A673 (cell line): ENCODE measurements at regions of chr2 and their contacts with region 1.

Region 1: GRCh38 chr2:66574701-66575624 is 140.0 kb downstream of the MEIS1 start:
- DNase-seq: peak; percentile 97
- H3K4me3 ChIP-seq: peak overlapping the region; percentile 65
- H3K27ac ChIP-seq: peak overlapping the region; percentile 92
- H3K4me1 ChIP-seq: peaks cover 75% of the 10 kb centered on the region
- H3K27me3 ChIP-seq: no peaks in the 10 kb centered on the region
- CTCF ChIP-seq: peak; percentile 74

Region 2: DNA sequence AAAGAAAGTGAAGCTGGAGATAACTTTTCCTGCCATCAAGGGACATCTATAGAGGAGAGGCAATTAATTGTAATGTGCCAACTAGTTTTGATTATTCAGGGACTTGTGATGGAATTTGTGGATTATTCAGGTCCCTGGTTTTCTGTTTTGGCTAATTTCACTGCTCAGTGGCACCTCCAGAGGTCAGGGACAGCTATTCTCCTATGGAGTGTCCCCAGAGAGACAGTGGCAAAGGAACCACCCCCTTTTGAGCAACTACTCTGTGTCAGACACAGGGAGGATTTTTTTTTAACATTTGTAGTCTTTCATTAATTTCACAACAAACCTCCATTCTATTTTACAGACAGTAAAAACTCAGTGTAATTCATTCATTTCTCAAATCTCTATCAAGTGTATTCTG is 936.5 kb before region 1 on chr2:
- CTCF ChIA-PET with region 1: no interaction called
- POLR2A ChIA-PET with region 1: no interaction called
- intact Hi-C with region 1: loop called (anchors 5 kb)
- DNase-seq: peak; percentile 77
- H3K4me3 ChIP-seq: no peak overlapping the region
- H3K27ac ChIP-seq: peak overlapping the region; percentile 84
- H3K4me1 ChIP-seq: peaks cover 60% of the 10 kb centered on the region
- H3K27me3 ChIP-seq: no peaks in the 10 kb centered on the region
- CTCF ChIP-seq: peak; percentile 46

Region 3: DNA sequence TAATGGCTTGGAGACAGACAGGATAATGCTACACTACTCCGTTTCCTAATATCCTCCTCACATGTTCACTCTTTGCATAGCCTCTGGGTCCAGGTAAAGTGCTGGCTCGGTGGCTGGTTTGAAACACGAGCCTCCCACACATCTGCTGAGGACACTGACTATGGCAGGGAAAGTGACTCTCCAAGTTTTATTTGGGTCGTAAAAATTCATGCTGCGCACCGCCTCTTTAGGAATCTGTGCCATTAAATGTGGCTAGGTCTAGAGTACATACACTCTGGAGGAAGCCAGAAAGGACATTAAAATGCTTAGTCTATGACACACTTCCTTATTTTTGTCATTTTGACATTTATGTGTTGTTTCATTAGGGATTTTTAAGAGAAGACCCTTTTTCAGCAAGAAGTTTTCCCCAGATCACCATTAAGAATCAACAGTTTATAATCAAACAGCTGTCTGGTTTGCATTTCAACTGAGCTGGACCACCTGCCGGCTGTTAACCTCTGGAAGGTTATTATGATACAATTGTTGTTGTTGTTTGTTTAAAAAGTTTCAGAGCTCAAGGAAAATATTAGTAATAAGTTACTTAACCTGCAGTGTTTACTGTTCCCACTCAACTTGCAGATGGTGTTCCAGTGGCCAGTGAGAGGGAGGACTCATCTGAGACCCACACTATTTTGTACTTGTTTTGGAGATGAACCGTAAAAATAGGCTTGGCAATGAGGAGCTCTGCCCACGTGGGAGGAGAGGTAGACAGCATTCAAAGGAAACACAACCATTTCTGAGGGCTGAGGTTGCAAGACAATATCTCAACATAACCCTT is 583.4 kb before region 1 on chr2:
- CTCF ChIA-PET with region 1: no interaction called
- POLR2A ChIA-PET with region 1: no interaction called
- intact Hi-C with region 1: loop called (anchors 10 kb)
- DNase-seq: peak; percentile 97
- H3K4me3 ChIP-seq: no peak overlapping the region
- H3K27ac ChIP-seq: peak overlapping the region; percentile 60
- H3K4me1 ChIP-seq: peaks cover 22% of the 10 kb centered on the region
- H3K27me3 ChIP-seq: peaks cover 8% of the 10 kb centered on the region
- CTCF ChIP-seq: no peak

Region 4: GRCh38 chr2:66434679-66435548 is 140.0 kb before region 1 on chr2 and contains the start of gene MEIS1:
- CTCF ChIA-PET with region 1: interaction called, 6 read pairs
- POLR2A ChIA-PET with region 1: interaction called, 3 read pairs
- intact Hi-C with region 1: loop called (anchors 2 kb)
- DNase-seq: peak; percentile 98
- H3K4me3 ChIP-seq: peak within 1 kb of the TSS; percentile 59
- H3K27ac ChIP-seq: peak within 1 kb of the TSS; percentile 95
- H3K4me1 ChIP-seq: peaks cover 19% of the 10 kb centered on the region
- H3K27me3 ChIP-seq: no peaks in the 10 kb centered on the region
- CTCF ChIP-seq: no peak
- total RNA-seq, gene MEIS1: 89.4 and 103 TPM in 2 replicates

Region 5: DNA sequence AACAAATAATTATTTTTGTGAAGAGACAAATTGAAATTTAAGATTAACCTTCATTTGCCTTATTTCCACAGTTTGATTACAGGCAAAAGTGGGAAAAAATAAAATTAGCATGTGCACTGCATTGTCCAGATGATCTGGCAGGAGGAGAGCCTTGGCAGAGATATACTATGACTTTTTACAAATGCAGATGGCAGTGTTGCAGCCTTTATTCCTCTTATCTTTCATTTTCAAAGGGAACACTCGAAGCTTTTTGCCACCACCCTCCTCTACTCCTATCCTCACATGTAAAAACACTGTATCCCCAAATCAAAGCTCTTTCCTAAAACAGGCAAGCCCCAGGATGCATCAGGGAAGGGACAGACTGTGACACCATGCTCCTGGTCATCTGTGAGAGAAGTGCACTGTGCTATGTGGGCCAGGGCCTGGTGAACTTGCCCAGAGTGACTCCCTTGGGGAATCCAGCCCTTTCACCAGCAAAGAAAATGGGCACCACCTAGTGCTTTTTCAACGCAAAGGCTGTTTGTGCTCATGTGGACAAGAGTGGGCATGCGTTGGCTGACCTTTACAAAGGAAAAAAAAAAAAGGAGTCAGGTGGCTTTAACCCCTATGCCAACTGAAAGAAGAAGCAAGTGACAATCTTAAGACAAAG is 747.5 kb after region 1 on chr2:
- CTCF ChIA-PET with region 1: no interaction called
- POLR2A ChIA-PET with region 1: no interaction called
- intact Hi-C with region 1: loop called (anchors 2 kb)
- DNase-seq: peak; percentile 76
- H3K4me3 ChIP-seq: no peak overlapping the region
- H3K27ac ChIP-seq: peak overlapping the region; percentile 34
- H3K4me1 ChIP-seq: peaks cover 49% of the 10 kb centered on the region
- H3K27me3 ChIP-seq: no peaks in the 10 kb centered on the region
- CTCF ChIP-seq: peak; percentile 67

Region 6: DNA sequence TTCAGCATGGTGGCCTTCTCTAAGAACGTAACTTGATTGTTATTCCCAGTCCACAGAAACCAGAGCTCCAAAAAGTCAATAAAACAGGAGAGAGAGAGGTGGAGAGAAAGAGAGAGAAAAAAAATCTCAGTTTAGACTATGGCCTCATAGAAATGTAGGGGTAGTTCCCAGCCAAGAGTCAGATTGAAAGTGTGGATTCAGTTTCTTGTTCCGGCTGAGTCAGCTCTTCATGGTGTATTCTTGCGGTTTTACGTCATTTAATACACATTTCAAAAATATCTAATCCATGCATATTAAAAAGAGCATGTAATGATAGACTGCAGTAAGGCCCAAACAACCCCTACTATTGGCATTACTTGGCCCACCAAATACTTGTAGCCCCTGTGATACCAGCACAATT is 1126.0 kb after region 1 on chr2:
- CTCF ChIA-PET with region 1: no interaction called
- POLR2A ChIA-PET with region 1: no interaction called
- intact Hi-C with region 1: no loop called
- DNase-seq: no peak
- H3K4me3 ChIP-seq: no peak overlapping the region
- H3K27ac ChIP-seq: no peak overlapping the region
- H3K4me1 ChIP-seq: no peaks in the 10 kb centered on the region
- H3K27me3 ChIP-seq: no peaks in the 10 kb centered on the region
- CTCF ChIP-seq: no peak

Region 7: GRCh38 chr2:68031542-68032160 is 1456.7 kb after region 1 on chr2:
- CTCF ChIA-PET with region 1: no interaction called
- POLR2A ChIA-PET with region 1: no interaction called
- intact Hi-C with region 1: loop called (anchors 2 kb)
- DNase-seq: peak; percentile 81
- H3K4me3 ChIP-seq: no peak overlapping the region
- H3K27ac ChIP-seq: peak overlapping the region; percentile 20
- H3K4me1 ChIP-seq: peaks cover 11% of the 10 kb centered on the region
- H3K27me3 ChIP-seq: no peaks in the 10 kb centered on the region
- CTCF ChIP-seq: peak; percentile 72